Esophagus squamous epithelium (tissue), 5 donors: ENCODE measurements at regions of chr19 and their contacts with region 1.

Region 1: DNA sequence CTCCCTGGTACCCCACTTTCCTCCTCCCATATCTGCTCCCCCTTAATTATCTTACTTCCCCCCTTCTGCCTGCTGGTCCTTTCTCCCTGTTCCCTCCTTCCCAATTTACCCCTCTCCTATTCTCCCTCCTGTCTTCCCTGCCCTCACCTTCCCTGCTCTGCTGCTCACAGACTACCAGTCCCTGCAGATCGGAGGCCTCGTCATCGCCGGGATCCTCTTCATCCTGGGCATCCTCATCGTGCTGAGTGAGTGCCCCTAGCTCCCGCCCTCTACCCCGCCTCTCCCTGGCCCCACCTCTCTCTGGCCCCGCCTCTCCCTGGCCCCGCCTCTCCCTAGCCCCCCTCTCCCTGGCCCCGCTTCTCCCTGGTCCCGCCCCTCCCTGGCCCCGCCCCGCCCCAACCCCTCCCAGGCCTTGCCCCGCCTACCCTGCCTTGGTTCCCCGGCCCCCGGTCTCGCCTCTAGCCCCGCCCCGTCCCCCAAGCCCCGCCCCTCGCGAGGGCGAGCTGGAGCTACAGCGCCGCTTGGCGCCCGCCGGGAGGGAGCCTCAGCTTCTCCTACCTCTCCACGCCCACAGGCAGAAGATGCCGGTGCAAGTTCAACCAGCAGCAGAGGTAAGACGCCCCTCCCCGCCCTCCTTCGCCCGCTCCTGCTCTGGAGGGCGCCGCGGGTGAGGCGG is 2.0 kb upstream of the FXYD7 start:
- DNase-seq: peak; percentile 67
- H3K4me3 ChIP-seq: peak overlapping the region in 3 of 4 donors; percentile 35 to 57 (median 37)
- H3K27ac ChIP-seq: peak overlapping the region; percentile 70 to 93 (median 88)
- H3K4me1 ChIP-seq: peaks cover 26 to 73% (median 39%) of the 10 kb centered on the region in 3 donors
- H3K27me3 ChIP-seq: peaks cover 0 to 38% (median 9%) of the 10 kb centered on the region in 4 donors
- CTCF ChIP-seq: peak; percentile 15 to 61 (median 52)
- POLR2A ChIP-seq: peak in 2 of 4 donors; percentile 47 to 57

Region 2: DNA sequence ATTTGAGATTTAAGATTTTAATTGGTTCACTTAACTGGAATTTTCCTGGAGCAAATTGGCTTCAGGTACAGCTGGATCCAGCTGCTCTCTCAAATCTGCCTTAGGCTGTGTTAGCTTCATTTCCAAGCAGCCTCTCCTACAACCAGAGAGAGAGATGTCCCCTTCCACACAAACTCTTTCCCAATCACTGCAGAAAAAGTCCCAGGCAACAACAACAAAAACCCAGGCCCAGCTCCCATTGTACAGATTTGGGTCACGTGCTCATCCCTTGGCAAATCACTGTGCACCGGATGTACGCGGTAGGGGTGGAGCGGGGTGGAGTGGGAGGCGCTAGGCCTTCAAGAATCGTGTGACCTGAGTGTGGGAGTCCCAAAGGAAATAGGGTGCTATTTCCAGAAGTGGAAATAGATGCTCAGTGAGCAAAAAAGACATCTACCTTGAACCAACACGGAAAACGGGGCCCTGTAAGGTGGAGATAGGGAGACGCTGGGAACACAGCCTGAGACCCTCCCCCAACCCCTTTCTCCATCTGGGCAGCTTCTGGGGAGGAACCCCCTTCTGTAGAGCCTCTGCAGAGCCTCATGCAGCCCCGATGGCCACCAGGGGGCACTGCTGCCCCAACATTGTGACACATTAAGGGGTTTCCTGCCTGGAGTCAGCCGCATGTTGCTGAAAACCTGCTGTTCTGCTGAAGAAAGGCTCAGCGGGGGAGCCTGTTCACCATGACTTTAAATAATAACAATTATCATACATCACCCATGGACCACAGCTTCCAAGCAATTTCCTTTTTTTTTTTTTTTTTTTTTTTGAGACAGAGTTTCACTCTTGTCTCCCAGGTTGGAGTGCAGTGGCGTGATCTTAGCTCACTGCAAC is 74.2 kb before region 1 on chr19:
- intact Hi-C with region 1: loop called (anchors 5 kb)
- DNase-seq: peak; percentile 28
- H3K4me3 ChIP-seq: peak overlapping the region in 1 of 4 donors; percentile 24
- H3K27ac ChIP-seq: no peak overlapping the region
- H3K4me1 ChIP-seq: peaks cover 0 to 10% (median 0%) of the 10 kb centered on the region in 3 donors
- H3K27me3 ChIP-seq: no peaks in the 10 kb centered on the region
- CTCF ChIP-seq: peak; percentile 93 to 96 (median 94)
- POLR2A ChIP-seq: no peak

Region 3: DNA sequence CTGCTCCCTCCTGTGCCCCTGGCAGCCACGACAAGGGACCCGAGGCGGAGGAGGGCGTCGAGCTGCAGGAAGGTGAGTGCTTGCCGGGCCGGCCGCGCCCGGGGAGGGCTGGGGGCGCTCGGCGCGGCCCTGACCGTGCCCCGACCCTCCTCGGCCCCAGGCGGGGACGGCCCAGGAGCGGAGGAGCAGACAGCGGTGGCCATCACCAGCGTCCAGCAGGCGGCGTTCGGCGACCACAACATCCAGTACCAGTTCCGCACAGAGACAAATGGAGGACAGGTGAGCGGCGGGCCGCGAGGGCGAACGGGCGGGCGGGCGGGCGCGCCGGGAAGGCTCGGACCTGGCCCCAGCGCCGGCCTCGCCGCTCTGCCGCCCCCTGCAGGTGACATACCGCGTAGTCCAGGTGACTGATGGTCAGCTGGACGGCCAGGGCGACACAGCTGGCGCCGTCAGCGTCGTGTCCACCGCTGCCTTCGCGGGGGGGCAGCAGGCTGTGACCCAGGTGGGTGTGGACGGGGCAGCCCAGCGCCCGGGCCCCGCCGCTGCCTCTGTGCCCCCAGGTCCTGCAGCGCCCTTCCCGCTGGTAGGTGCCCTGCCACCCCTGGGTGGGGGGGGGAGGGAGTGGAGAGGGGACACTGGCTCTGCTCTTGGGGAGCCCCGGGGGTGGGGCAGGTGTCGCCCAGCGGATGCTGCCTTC is 128.5 kb after region 1 on chr19:
- intact Hi-C with region 1: loop called (anchors 5 kb)
- DNase-seq: no peak
- H3K4me3 ChIP-seq: peak overlapping the region; percentile 63 to 95 (median 75)
- H3K27ac ChIP-seq: peak overlapping the region; percentile 94 to 98 (median 96)
- H3K4me1 ChIP-seq: peaks cover 21 to 79% (median 32%) of the 10 kb centered on the region in 3 donors
- H3K27me3 ChIP-seq: no peaks in the 10 kb centered on the region
- CTCF ChIP-seq: peak; percentile 49 to 95 (median 62)
- POLR2A ChIP-seq: no peak